ENCODE measurements at regions of chr7 and their contacts with region 1.

Region 1: GRCh38 chr7:84675633-84676034 is 481.0 kb upstream of the SEMA3A start:
- DNase-seq: peak; percentile 85
- H3K4me3 ChIP-seq: no peak overlapping the region
- H3K27ac ChIP-seq: peak overlapping the region; percentile 16
- H3K4me1 ChIP-seq: peaks cover 26% of the 10 kb centered on the region
- H3K27me3 ChIP-seq: no peaks in the 10 kb centered on the region
- CTCF ChIP-seq: no peak
- POLR2A ChIP-seq: peak; percentile 29

Region 2: DNA sequence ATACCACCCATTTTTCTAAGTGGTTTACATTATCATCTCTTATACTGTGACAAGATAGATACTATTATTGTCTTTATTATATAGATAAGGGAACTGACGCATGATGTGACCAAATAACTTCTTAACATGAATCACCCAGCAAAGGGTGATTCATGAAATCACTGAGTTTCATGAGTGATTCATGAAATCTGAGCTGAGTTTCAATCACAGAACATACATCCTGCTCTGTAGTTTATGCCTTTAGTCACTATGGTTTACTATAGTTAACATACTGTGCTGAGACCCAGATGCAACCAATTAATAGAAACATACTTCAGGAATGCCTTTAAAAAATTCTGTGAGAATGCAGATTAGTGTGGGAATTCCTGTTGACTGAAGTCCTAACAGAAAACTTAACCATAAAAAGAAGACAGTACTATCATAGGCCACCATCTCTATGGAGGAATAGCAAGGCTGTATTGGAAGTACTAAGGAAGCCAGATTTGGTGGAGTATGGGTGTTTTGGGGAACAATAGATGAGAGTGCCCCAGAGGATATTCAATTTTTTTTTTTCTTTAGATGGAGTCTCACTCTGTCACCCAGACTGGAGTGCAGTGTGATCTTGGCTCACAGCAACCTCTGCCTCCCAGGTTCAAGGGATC is 438.0 kb before region 1 on chr7:
- CTCF ChIA-PET with region 1: no interaction called
- POLR2A ChIA-PET with region 1: no interaction called
- dilution Hi-C with region 1: no loop called
- intact Hi-C with region 1: loop called (anchors 10 kb)
- DNase-seq: peak; percentile 81
- H3K4me3 ChIP-seq: no peak overlapping the region
- H3K27ac ChIP-seq: peak overlapping the region; percentile 79
- H3K4me1 ChIP-seq: peaks cover 24% of the 10 kb centered on the region
- H3K27me3 ChIP-seq: no peaks in the 10 kb centered on the region
- CTCF ChIP-seq: no peak
- POLR2A ChIP-seq: no peak

Region 3: GRCh38 chr7:84688671-84689070 is 13.0 kb after region 1 on chr7:
- CTCF ChIA-PET with region 1: interaction called, 10 read pairs
- POLR2A ChIA-PET with region 1: no interaction called
- dilution Hi-C with region 1: no loop called
- intact Hi-C with region 1: loop called (anchors 1 kb)
- DNase-seq: peak; percentile 75
- H3K4me3 ChIP-seq: no peak overlapping the region
- H3K27ac ChIP-seq: peak overlapping the region; percentile 78
- H3K4me1 ChIP-seq: peaks cover 16% of the 10 kb centered on the region
- H3K27me3 ChIP-seq: no peaks in the 10 kb centered on the region
- CTCF ChIP-seq: no peak
- POLR2A ChIP-seq: no peak

Region 4: GRCh38 chr7:84829719-84830118 is 154.1 kb after region 1 on chr7:
- CTCF ChIA-PET with region 1: no interaction called
- POLR2A ChIA-PET with region 1: no interaction called
- dilution Hi-C with region 1: no loop called
- intact Hi-C with region 1: no loop called
- DNase-seq: no peak
- H3K4me3 ChIP-seq: no peak overlapping the region
- H3K27ac ChIP-seq: no peak overlapping the region
- H3K4me1 ChIP-seq: no peaks in the 10 kb centered on the region
- H3K27me3 ChIP-seq: no peaks in the 10 kb centered on the region
- CTCF ChIP-seq: no peak
- POLR2A ChIP-seq: no peak